ENCODE measurements at regions of chr1 and their contacts with region 1.

Region 1: DNA sequence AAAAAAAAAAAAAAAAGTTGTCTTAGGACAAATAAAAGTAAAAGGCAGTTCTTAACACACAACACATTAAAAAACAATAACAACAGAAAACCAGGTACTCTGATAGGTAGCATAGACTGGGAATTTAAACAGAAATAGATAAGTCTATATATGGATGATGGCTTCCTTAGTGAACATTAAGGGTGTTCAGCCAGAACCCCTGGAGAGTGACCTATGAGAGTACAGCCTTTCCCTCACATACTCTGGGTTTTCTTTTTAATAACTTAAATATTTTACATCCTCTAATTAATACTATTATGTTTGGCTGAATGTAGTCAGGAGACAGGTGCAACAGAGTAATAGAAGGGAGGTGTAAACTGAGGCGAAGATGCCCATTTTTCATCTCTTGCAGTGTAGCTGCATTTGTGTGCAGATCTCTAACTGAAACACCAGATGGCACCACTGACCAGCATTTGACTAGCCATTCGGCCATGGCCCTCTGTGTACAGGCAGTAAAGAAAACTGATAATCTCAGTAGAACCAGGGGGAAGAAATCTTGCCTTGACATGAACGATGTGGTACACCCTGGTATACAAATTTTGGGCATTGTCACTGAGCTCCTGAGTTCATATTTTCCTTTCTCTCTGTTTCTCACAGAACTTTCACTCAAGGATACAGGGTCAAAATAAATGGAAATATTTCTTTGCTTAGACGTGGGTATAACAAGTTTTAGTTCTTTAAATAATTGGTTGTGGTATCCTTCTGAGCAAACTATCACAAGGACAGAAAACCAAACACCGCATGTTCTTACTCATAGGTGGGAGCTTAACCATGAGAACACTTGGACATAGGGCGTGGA is 7.6 kb downstream of the TTF2 start:
- DNase-seq: peak; percentile 61
- H3K4me3 Mint-ChIP-seq: no peak overlapping the region
- H3K27ac Mint-ChIP-seq: peak overlapping the region; percentile 59
- H3K4me1 Mint-ChIP-seq: peaks cover 36% of the 10 kb centered on the region
- H3K27me3 Mint-ChIP-seq: no peaks in the 10 kb centered on the region

Region 2: DNA sequence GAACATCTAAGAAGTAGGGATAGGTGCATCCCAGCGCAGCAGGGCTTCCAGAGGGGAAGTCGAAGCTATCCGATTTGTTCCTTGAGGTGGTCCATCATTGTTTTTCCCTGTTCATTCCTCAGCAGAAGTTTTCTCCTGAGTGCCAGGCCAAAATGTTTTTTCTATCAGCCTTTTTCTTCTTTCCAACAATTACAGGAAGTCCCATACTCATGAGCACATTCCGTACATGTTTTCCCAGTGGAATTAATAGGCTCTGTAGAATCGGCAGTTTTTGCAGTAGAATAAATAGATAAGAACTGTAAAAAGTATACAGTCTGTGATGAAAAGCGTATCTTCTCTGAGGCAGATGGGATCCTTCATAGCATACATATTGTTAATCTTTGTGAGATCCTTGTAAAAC is 41.4 kb before region 1 on chr1:
- CTCF ChIA-PET with region 1: no interaction called
- DNase-seq: no peak
- H3K4me3 Mint-ChIP-seq: no peak overlapping the region
- H3K27ac Mint-ChIP-seq: no peak overlapping the region
- H3K4me1 Mint-ChIP-seq: peaks cover 2% of the 10 kb centered on the region
- H3K27me3 Mint-ChIP-seq: no peaks in the 10 kb centered on the region

Region 3: DNA sequence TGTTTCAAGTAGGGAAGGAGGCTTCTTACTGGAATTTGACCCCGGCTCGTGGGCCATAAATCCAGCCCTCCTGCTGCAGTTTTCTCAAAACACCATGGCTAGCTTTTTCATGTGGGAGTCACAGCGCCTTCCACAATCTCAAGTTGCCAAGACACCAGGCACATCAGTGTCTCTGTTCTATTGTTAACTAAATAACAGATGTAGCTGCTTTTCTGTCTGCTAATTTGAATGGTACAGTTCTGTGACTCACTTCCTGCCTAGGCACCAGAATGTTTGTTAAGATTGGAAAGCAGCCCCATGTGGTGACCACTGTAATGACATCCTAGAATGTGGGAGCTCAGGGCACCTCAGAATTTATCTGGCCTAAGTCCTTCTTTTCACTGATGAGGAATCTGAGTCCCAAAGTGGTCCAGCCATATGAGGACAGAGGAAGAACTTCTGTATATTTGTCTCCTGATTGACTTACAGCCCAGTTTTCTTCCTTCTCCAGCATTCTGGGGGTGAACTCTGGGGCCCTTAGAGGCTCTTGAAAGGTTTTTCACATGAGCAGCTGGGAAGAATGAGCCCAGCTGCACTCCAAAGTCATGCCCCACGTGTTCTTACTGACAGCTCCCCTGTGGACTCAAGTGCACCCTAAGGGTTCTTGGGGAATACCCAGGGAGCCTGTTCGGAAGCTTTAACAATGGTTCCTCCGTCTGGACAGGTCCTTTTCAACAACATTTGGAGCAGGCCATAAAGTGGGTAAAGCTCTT is 26.3 kb after region 1 on chr1:
- CTCF ChIA-PET with region 1: interaction called, 20 read pairs
- DNase-seq: peak; percentile 57
- H3K4me3 Mint-ChIP-seq: no peak overlapping the region
- H3K27ac Mint-ChIP-seq: peak overlapping the region; percentile 39
- H3K4me1 Mint-ChIP-seq: peaks cover 15% of the 10 kb centered on the region
- H3K27me3 Mint-ChIP-seq: no peaks in the 10 kb centered on the region

Region 4: GRCh38 chr1:117128323-117129079 is 60.7 kb after region 1 on chr1:
- CTCF ChIA-PET with region 1: interaction called, 36 read pairs
- DNase-seq: no peak
- H3K4me3 Mint-ChIP-seq: no peak overlapping the region
- H3K27ac Mint-ChIP-seq: no peak overlapping the region
- H3K4me1 Mint-ChIP-seq: no peaks in the 10 kb centered on the region
- H3K27me3 Mint-ChIP-seq: peaks cover 17% of the 10 kb centered on the region